ENCODE measurements at regions of chr16 and their contacts with region 1.

Region 1: GRCh38 chr16:47141773-47142485 is 1.8 kb downstream of the NETO2 start:
- DNase-seq: peak; percentile 85 to 91 (median 89)
- ATAC-seq: peak; percentile 80
- H3K4me3 ChIP-seq: no peak overlapping the region
- H3K4me1 ChIP-seq: peaks cover 9% of the 10 kb centered on the region
- CTCF ChIP-seq: peak; percentile 72

Region 2: DNA sequence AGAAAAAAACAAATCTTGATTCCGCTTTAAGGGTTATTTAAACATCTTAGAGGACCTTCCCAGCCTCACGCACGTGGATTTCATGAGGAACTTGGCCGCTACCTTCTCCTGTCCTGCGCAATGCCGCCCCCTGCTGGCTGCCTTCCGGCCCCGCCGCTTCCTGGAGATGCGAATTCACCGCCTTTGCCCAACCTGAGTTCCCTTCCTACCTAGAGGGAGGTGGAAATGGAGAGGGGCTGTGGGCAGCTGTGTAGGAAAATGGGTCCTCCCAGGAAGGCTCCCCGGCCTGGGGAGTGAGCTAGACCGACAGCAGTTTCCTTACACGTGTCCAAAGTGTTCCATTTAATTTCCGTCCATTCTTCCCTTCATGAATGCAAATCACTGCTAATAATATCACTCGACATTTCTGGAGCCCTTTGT is 1014.9 kb after region 1 on chr16:
- intact Hi-C with region 1: loop called in 1 of 2 experiments (anchors 5 kb)
- DNase-seq: peak; percentile 76 to 90 (median 84)
- ATAC-seq: peak; percentile 90
- H3K4me3 ChIP-seq: no peak overlapping the region
- H3K4me1 ChIP-seq: no peaks in the 10 kb centered on the region
- CTCF ChIP-seq: peak; percentile 84